ENCODE measurements at regions of chr2 and their contacts with region 1.

Region 1: DNA sequence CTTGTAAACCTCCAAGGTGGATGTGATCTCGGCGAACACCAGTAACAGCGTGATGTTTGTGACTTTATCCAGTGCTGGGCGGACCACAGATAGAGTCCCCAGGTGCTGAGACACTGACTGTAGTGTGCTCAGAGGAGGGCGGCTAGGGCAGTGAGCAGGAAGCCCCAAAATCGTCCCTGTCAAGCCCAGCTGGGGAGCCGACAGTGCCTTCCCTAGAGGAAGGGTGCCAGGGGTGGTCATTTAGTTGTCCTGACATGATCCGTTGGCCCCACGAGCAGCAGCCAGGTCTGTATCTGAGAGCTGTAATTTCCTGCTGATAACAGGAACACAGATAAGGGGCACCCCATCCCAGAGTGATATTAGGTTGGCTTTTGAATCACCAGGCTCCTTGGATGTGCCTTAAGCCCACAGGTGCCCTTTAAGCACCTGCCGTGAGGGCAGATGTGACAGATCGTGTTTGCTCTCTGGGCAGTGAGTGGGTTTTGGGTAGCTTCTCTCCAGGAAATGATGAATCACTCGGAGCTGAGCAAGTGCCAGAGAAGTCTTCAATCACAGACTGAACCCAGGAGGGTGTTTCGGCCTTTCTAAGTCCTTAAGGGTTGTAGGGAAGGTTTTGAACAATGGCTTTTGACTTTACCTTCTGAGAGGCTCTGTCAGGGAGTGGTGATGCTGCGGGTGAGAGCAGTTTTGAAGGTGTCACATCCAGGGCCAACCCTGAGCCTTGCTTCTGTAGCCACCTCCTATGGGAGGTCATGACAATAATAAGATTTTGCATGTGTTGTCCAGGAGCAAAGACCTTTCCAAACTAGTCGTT is 7.7 kb downstream of the LPIN1 start:
- DNase-seq: no peak
- ATAC-seq: peak; percentile 40
- H3K4me3 ChIP-seq: peak overlapping the region; percentile 6 to 58 (median 46)
- H3K4me3 Mint-ChIP-seq: peak overlapping the region; percentile 94
- H3K27ac ChIP-seq: peak overlapping the region; percentile 71 to 89
- H3K27ac Mint-ChIP-seq: peak overlapping the region; percentile 98
- H3K4me1 ChIP-seq: peaks cover 70 to 94% of the 10 kb centered on the region in 2 donors
- H3K4me1 Mint-ChIP-seq: peaks cover 88% of the 10 kb centered on the region
- H3K27me3 ChIP-seq: no peaks in the 10 kb centered on the region
- H3K27me3 Mint-ChIP-seq: no peaks in the 10 kb centered on the region
- CTCF ChIP-seq: no peak

Region 2: DNA sequence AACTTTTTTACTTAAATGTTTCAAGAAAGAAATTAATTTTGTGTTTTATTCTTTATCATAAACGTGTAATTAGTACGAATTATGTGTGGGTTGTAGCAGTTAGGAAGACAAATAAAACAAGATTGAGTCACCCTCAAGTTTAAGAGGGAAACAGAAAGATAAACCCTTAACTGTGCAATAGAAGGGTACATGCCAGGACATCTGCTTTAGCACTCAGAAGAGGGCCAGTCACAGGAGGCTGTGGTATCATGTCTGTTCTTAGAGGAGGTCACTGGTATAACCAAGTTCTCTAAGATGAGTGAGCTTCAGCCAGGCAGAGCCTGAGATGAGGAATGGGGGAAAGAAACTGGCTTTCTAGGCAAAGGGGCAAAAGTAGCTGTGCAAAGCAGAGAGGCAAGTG is 1845.0 kb before region 1 on chr2:
- CTCF ChIA-PET with region 1: no interaction called
- POLR2A ChIA-PET with region 1: no interaction called
- intact Hi-C with region 1: no loop called
- DNase-seq: no peak
- ATAC-seq: no peak
- H3K4me3 ChIP-seq: no peak overlapping the region
- H3K4me3 Mint-ChIP-seq: no peak overlapping the region
- H3K27ac ChIP-seq: no peak overlapping the region
- H3K27ac Mint-ChIP-seq: no peak overlapping the region
- H3K4me1 ChIP-seq: no peaks in the 10 kb centered on the region
- H3K4me1 Mint-ChIP-seq: no peaks in the 10 kb centered on the region
- H3K27me3 ChIP-seq: no peaks in the 10 kb centered on the region
- H3K27me3 Mint-ChIP-seq: no peaks in the 10 kb centered on the region
- CTCF ChIP-seq: no peak

Region 3: GRCh38 chr2:10787176-10787968 is 966.7 kb before region 1 on chr2:
- CTCF ChIA-PET with region 1: no interaction called
- POLR2A ChIA-PET with region 1: no interaction called
- intact Hi-C with region 1: no loop called
- DNase-seq: peak; percentile 44
- ATAC-seq: no peak
- H3K4me3 ChIP-seq: no peak overlapping the region
- H3K4me3 Mint-ChIP-seq: no peak overlapping the region
- H3K27ac ChIP-seq: no peak overlapping the region
- H3K27ac Mint-ChIP-seq: no peak overlapping the region
- H3K4me1 ChIP-seq: no peaks in the 10 kb centered on the region
- H3K4me1 Mint-ChIP-seq: peaks cover 5% of the 10 kb centered on the region
- H3K27me3 ChIP-seq: no peaks in the 10 kb centered on the region
- H3K27me3 Mint-ChIP-seq: no peaks in the 10 kb centered on the region
- CTCF ChIP-seq: peak; percentile 34

Region 4: DNA sequence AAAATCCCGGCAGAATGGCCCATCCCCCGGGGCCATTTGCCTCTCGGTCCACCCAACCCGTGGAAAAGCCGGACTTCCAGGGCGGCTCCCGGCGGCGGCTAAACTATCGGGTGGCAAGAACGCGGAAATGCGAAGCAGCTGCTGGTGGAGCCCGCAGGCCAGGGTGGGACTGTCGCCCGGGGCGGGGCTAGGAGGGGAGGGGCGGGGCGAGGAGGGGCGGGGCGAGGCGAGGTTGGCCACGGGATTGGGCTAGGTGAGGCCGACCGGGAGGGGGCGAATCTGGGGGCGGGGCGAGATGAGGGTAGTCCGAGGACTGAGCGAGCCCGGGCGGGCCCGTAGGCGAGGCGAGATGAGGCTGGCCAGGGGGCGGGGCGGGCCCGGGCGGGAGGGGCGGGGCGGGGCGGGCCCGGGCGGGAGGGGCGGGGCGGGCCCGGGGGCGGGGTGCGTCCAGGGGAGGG is 599.1 kb before region 1 on chr2:
- CTCF ChIA-PET with region 1: no interaction called
- POLR2A ChIA-PET with region 1: no interaction called
- intact Hi-C with region 1: loop called (anchors 2 kb)
- DNase-seq: peak; percentile 96
- ATAC-seq: peak; percentile 89
- H3K4me3 ChIP-seq: peak overlapping the region; percentile 30 to 87 (median 81)
- H3K4me3 Mint-ChIP-seq: peak overlapping the region; percentile 88
- H3K27ac ChIP-seq: peak overlapping the region; percentile 89 to 93
- H3K27ac Mint-ChIP-seq: peak overlapping the region; percentile 93
- H3K4me1 ChIP-seq: peaks cover 15 to 20% of the 10 kb centered on the region in 2 donors
- H3K4me1 Mint-ChIP-seq: peaks cover 18% of the 10 kb centered on the region
- H3K27me3 ChIP-seq: peaks cover 0 to 5% (median 0%) of the 10 kb centered on the region in 4 experiments
- H3K27me3 Mint-ChIP-seq: no peaks in the 10 kb centered on the region
- CTCF ChIP-seq: no peak

Region 5: DNA sequence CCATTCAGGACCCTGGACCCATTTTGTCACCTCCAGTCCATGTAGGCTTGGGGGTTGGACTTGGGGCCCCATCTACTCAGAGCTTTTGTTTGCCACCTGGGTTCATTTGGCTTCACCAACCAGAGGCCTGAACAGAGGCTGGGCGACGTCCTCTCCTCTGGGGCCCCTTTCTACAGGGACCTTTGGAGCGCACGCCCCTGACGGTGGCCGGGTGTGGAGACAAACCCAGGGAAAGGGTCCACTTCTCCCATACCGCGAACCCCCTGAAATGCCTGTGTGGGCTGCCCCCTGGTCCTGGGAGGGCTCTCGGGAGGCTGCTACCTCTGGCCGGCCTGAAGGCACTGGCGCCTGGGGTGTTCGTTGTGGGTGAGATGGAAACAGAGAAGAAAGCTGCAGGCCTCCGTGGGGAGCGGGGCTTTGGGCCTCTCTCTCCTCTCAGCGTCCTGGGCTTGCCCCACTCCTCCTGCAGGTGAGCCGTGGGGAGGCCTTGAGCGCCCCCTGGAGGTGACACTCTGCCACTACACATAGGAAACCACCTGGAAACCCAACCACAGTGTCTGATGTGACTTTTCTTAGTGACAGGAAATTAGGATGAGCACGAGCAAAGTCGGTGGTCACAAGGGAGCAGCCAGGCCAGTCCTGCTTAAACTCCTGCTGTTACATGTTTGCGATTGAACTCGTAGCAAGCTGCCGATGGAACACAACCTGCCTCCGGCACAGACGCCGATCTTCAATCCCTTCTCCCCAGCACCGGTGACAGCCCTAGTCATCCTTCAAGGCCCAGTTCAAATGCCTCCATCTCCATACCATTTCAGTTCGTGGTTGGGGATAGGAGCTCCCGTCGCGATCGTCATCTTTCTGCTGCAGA is 72.1 kb before region 1 on chr2:
- CTCF ChIA-PET with region 1: no interaction called
- POLR2A ChIA-PET with region 1: no interaction called
- intact Hi-C with region 1: no loop called
- DNase-seq: peak; percentile 61
- ATAC-seq: peak; percentile 31
- H3K4me3 ChIP-seq: no peak overlapping the region
- H3K4me3 Mint-ChIP-seq: no peak overlapping the region
- H3K27ac ChIP-seq: no peak overlapping the region
- H3K27ac Mint-ChIP-seq: no peak overlapping the region
- H3K4me1 ChIP-seq: no peaks in the 10 kb centered on the region
- H3K4me1 Mint-ChIP-seq: no peaks in the 10 kb centered on the region
- H3K27me3 ChIP-seq: peaks cover 0 to 22% (median 0%) of the 10 kb centered on the region in 4 experiments
- H3K27me3 Mint-ChIP-seq: peaks cover 47% of the 10 kb centered on the region
- CTCF ChIP-seq: peak; percentile 73

Region 6: DNA sequence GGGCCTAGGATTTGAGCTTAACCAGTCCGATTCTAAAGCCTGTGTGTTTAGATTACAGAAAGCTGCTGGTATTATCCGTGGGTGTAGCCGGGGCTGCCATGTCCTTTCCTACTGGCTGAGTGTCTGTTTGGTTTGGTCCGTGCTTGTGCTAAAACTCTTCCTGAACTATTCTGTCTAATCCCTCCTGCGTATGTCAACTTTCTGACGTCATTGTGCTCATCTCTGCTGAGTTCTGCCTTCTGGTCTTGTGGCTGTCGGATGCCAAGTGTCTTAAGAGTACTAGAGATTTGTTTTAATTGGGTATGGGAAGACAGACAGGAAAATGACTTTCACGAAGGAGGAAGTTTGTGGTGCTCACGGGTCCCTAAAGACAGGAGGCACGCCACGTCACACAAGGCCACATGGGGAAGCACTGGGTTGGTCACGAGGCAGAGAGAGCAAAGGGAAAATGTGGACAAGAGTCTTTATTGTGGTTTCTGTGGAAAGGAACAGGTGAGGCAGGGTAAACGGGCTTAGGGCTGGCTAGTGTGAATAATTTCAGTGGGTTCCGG is 52.3 kb before region 1 on chr2:
- CTCF ChIA-PET with region 1: interaction called, 5 read pairs
- POLR2A ChIA-PET with region 1: no interaction called
- intact Hi-C with region 1: loop called (anchors 5 kb)
- DNase-seq: peak; percentile 87
- ATAC-seq: peak; percentile 79
- H3K4me3 ChIP-seq: no peak overlapping the region
- H3K4me3 Mint-ChIP-seq: no peak overlapping the region
- H3K27ac ChIP-seq: peak overlapping the region in 1 of 2 donors; percentile 10
- H3K27ac Mint-ChIP-seq: no peak overlapping the region
- H3K4me1 ChIP-seq: peaks cover 14 to 17% of the 10 kb centered on the region in 2 donors
- H3K4me1 Mint-ChIP-seq: no peaks in the 10 kb centered on the region
- H3K27me3 ChIP-seq: peaks cover 0 to 15% (median 2%) of the 10 kb centered on the region in 4 experiments
- H3K27me3 Mint-ChIP-seq: peaks cover under 1% of the 10 kb centered on the region
- CTCF ChIP-seq: no peak

Region 7: DNA sequence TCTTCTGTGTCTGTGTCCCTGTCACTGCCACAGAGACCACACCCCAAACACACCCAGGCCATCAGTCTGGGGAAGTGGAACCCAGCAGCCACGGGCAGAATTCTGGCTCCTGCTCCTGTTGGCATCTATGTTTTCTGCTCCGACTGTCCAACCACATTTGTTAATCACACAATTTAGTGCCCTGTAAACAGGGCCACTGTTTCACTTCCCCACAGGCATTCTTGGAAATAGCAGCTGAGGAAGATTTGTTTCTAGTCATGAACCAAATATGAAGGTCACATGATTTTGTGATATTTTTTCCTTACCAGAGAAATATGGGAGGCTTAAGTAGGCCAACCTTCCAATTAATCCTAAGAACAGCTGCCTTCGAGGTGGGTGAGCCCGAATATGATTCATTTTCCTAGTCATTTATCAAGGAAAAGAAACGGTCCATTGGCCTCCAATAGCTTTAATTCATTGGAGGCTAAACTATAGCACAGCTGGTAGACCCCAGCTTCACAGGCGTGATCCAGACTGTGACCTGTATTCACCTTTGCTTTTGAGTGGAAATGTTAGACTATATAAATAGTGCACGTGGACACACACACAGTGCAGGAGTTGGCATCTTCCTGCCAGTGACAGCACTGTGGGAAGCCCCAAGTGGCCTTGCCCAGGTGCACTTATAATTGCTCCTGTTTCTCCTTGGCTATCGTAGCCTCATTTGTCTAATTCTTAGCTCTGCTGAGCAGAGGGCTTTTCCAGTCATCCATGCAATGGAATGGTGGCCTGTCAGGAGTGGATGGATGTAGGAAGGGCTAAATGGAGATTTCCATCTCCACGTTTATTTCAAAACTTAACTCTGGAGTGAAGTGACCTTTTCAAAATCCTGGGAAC is 260.2 kb after region 1 on chr2:
- CTCF ChIA-PET with region 1: no interaction called
- POLR2A ChIA-PET with region 1: no interaction called
- intact Hi-C with region 1: no loop called
- DNase-seq: no peak
- ATAC-seq: no peak
- H3K4me3 ChIP-seq: peak overlapping the region in 1 of 5 experiments; percentile 3
- H3K4me3 Mint-ChIP-seq: peak overlapping the region; percentile 12
- H3K27ac ChIP-seq: no peak overlapping the region
- H3K27ac Mint-ChIP-seq: no peak overlapping the region
- H3K4me1 ChIP-seq: peaks cover 25 to 30% of the 10 kb centered on the region in 2 donors
- H3K4me1 Mint-ChIP-seq: peaks cover 70% of the 10 kb centered on the region
- H3K27me3 ChIP-seq: no peaks in the 10 kb centered on the region
- H3K27me3 Mint-ChIP-seq: no peaks in the 10 kb centered on the region
- CTCF ChIP-seq: no peak

Region 8: DNA sequence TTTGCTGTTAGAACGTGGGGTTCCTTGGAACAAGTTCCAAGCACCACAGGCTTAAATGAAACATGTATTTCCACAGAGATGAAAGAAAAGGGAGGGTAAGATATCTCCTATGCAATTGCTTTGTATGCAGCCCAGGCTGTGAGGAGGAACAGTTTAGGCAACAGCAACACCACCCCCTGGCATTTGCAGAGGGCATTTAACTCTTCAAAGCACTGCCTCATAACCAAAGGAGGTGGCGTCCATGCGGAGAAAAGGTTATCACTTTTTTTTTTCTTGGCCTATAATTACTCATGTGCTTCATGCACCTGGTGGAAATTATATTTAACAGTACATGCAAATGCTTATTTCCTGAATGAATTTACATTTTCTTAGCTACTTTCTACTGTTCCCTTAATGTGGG is 278.3 kb after region 1 on chr2:
- CTCF ChIA-PET with region 1: no interaction called
- POLR2A ChIA-PET with region 1: no interaction called
- intact Hi-C with region 1: loop called (anchors 10 kb)
- DNase-seq: peak; percentile 86
- ATAC-seq: peak; percentile 77
- H3K4me3 ChIP-seq: peak overlapping the region in 2 of 5 experiments; percentile 7 to 39
- H3K4me3 Mint-ChIP-seq: peak overlapping the region; percentile 83
- H3K27ac ChIP-seq: peak overlapping the region; percentile 66 to 81
- H3K27ac Mint-ChIP-seq: peak overlapping the region; percentile 92
- H3K4me1 ChIP-seq: peaks cover 61 to 64% of the 10 kb centered on the region in 2 donors
- H3K4me1 Mint-ChIP-seq: peaks cover 66% of the 10 kb centered on the region
- H3K27me3 ChIP-seq: no peaks in the 10 kb centered on the region
- H3K27me3 Mint-ChIP-seq: no peaks in the 10 kb centered on the region
- CTCF ChIP-seq: peak; percentile 39

Region 9: DNA sequence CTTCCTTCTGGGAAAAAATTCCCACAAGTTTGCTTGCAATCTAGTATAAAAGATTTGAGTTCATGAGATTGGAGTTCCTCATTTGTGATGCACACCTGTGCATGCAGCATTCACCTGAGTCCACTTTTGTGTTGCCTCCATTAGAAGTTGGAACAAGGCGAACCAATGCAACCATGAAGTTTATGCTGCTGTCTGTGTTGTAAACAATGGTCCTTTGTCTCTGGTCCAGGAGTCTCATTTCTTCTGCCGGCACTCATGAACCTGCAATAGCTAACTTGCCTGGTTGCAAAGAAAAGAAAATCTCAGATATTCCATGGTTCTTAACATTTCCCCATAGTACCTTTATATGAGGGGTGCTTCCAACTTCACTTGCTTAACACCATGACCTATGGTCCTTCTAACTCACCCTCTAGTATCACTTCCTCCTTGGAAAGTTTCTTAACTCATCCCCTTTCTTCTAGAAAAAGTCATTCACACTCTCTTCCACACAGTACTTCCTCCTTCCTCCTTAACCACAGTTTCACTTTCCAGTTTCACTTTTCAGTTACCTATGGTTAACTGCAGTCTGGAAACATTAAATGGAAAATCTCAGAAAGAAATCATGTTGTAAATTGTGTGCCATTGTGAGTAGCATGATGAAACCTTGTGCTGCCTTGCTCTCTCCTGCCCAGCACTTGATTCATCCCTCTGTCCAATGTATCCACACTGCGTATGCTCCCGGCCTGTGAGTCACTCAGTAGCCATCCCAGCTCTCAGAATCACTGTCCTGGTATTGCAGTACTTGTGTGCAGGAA is 833.8 kb after region 1 on chr2:
- CTCF ChIA-PET with region 1: no interaction called
- POLR2A ChIA-PET with region 1: no interaction called
- intact Hi-C with region 1: loop called (anchors 10 kb)
- DNase-seq: peak; percentile 86
- ATAC-seq: peak; percentile 94
- H3K4me3 ChIP-seq: peak overlapping the region in 1 of 5 experiments; percentile 34
- H3K4me3 Mint-ChIP-seq: peak overlapping the region; percentile 46
- H3K27ac ChIP-seq: no peak overlapping the region
- H3K27ac Mint-ChIP-seq: peak overlapping the region; percentile 75
- H3K4me1 ChIP-seq: peaks cover 39 to 41% of the 10 kb centered on the region in 2 donors
- H3K4me1 Mint-ChIP-seq: peaks cover 46% of the 10 kb centered on the region
- H3K27me3 ChIP-seq: no peaks in the 10 kb centered on the region
- H3K27me3 Mint-ChIP-seq: no peaks in the 10 kb centered on the region
- CTCF ChIP-seq: no peak